Astrocyte of the cerebellum (primary cell): ENCODE measurements at regions of chr21 and their contacts with region 1.

Region 1: DNA sequence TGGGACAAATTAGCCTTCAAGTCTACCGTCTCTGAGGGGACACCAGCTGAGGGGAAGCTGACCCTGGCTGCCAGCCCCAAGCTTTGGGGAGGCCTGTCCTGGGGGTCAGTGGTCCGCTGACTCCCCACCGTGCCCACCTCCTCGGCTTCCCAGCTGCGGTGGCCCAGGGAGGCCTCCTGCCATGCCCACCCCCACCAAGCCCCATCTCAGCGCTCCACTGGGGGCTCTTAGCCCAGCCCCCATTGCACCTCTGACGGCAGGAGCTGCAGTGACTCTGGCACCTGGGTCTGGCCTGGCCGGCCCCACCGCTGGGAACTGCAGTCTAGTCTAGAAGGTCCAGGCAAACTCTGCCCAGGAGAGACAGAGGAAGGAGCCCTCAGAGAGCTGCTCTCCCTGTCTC is 30.2 kb upstream of the SIM2 start:
- DNase-seq: no peak
- H3K4me3 ChIP-seq: no peak overlapping the region
- CTCF ChIP-seq: no peak

Region 2: DNA sequence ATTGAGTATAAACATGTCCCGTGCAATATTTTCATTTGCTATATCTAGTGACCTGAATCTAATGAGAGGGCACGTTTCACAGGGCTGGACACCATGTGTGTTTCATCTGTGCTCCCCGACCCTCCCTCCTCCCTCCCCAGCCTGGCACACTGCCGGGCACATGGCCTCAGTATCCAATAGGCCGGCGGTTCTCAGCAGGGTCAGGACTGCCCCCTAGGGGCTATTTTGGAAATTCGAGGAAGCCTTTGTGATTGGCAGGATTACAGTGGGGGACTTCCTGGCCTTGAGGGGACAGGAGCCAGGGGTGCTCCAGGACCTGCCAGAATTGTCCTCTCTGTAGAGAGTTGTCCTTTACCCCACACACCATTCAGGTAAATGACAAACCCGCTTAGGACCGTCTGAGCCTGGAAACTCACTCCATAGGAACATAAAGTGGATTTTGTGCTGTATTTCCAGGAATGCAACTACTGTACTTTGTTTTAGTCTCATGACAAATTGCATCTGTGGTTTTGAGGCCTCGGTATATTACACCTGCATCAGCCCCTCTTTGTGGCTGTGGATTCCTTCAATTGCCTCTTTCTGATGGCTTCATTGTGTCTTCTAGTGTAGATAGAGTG is 79.2 kb before region 1 on chr21:
- in situ Hi-C with region 1: loop called (anchors 5 kb)
- DNase-seq: no peak
- H3K4me3 ChIP-seq: no peak overlapping the region
- CTCF ChIP-seq: peak; percentile 55

Region 3: GRCh38 chr21:36627242-36627641 is 41.5 kb before region 1 on chr21:
- in situ Hi-C with region 1: loop called (anchors 5 kb)
- DNase-seq: no peak
- H3K4me3 ChIP-seq: no peak overlapping the region
- CTCF ChIP-seq: no peak

Region 4: DNA sequence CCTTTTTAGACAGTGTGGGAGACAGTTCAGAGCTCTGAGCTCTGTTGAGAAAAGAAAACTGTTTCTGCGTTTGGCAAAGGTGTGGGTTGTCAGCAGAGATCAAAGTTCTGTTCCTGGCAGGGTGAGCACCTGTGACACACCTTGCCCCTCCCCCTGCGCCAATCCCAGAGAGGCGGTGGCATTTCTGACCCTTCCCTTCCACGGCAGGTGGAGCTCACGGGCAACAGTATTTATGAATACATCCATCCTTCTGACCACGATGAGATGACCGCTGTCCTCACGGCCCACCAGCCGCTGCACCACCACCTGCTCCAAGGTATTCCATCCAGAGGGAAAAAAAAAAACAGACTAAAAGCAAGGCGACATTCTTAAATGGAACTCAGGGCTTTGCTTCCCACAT is 50.9 kb after region 1 on chr21:
- in situ Hi-C with region 1: loop called (anchors 5 kb)
- DNase-seq: no peak
- H3K4me3 ChIP-seq: no peak overlapping the region
- CTCF ChIP-seq: no peak

Region 5: GRCh38 chr21:36769051-36769839 is 100.5 kb after region 1 on chr21:
- in situ Hi-C with region 1: loop called (anchors 5 kb)
- DNase-seq: peak; percentile 87
- H3K4me3 ChIP-seq: no peak overlapping the region
- CTCF ChIP-seq: no peak

Region 6: DNA sequence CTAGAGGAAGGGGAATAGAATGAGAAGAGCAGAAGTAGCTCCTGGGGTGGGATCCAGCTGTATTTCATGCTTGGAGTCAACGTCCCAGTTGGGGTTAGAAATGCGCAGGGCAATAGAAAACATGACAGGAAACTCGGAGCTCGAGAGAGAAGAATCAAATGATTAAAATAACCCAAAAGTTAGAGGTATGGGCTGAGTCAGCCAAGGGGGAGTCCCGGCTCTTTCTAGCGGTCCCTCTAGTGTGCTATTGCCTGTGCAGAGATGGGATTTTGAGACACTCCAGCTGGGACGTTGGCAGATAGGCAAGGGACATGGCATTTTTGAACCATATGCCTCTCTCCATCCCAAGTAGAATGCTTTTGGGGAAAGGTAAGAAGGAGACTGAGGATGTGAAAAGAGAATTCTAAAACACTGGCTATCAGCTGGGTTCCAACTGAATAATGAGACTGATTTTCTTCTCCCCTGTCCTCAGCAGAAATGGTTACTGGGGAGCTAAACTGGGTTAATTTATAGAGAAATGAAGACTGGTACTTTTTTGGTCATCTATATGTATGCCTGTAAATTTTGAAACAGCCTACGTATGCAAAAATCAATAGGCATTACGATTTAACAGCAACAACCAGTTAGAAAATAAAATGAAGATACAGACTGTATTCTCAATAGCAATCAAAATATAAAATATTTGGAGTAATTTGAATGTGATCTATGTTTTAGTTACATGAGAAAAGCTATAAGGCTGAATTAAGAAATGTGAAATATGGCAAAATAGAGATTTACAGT is 605.4 kb after region 1 on chr21:
- in situ Hi-C with region 1: no loop called
- DNase-seq: no peak
- H3K4me3 ChIP-seq: no peak overlapping the region
- CTCF ChIP-seq: no peak